Activated naive CD4-positive, alpha-beta T cell treated with anti-CD3 and anti-CD28 coated beads for 36 hours (primary cell): ENCODE measurements at regions of chr2 and their contacts with region 1.

Region 1: GRCh38 chr2:238060542-238061314 is at the start of gene SCLY:
- DNase-seq: peak; percentile 99
- H3K4me3 Mint-ChIP-seq: peak within 1 kb of the TSS; percentile 90
- H3K27ac Mint-ChIP-seq: peak within 1 kb of the TSS; percentile 87
- H3K4me1 Mint-ChIP-seq: peaks cover 48% of the 10 kb centered on the region
- H3K27me3 Mint-ChIP-seq: peaks cover 3% of the 10 kb centered on the region
- total RNA-seq, gene SCLY: 46.4 to 46.7 TPM

Region 2: GRCh38 chr2:237818066-237818473 is 242.7 kb before region 1 on chr2:
- CTCF ChIA-PET with region 1: no interaction called
- intact Hi-C with region 1: loop called (anchors 5 kb)
- DNase-seq: no peak
- H3K4me3 Mint-ChIP-seq: no peak overlapping the region
- H3K27ac Mint-ChIP-seq: no peak overlapping the region
- H3K4me1 Mint-ChIP-seq: peaks cover 26% of the 10 kb centered on the region
- H3K27me3 Mint-ChIP-seq: no peaks in the 10 kb centered on the region

Region 3: DNA sequence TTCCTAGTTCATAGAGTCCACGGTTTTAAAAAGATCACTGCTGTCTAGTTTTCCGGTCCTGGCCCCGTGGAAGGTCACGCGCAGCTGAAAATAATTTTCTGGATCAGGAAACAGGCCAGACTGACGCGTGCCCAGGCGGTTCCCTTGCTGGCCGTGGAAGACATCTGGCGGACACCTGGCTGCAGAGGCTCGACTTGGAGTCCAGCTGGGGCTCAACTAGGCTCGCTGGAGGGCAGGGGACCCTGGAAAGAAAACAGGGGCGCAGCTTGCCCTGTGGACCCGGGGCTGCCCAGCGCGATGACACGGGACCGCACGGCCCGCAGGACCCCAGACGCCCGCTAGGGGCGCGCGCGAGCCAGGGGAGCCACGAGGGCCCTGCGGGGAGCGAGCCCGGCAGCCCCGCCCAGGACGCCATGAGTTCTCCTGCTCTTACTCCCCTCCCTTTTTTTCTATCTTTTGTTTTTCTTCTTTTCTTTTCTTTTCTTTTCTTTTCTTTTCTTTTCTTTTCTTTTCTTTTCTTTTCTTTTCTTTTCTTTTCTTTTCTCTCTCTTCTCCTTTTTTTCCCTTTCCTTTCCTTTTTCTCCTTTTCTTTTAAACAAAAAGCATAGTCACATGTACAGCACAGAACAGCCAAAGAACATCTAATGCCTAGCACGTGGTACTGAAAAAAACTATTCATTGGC is 137.1 kb before region 1 on chr2:
- CTCF ChIA-PET with region 1: interaction called, 4 read pairs
- intact Hi-C with region 1: loop called (anchors 5 kb)
- DNase-seq: peak; percentile 80
- H3K4me3 Mint-ChIP-seq: peak overlapping the region; percentile 52
- H3K27ac Mint-ChIP-seq: no peak overlapping the region
- H3K4me1 Mint-ChIP-seq: peaks cover 21% of the 10 kb centered on the region
- H3K27me3 Mint-ChIP-seq: no peaks in the 10 kb centered on the region

Region 4: GRCh38 chr2:238203094-238203972 is 142.6 kb after region 1 on chr2 and contains the start of gene ILKAP:
- CTCF ChIA-PET with region 1: no interaction called
- intact Hi-C with region 1: loop called (anchors 1 kb)
- DNase-seq: peak; percentile 89
- H3K4me3 Mint-ChIP-seq: peak within 1 kb of the TSS; percentile 80
- H3K27ac Mint-ChIP-seq: peak within 1 kb of the TSS; percentile 77
- H3K4me1 Mint-ChIP-seq: peaks cover 41% of the 10 kb centered on the region
- H3K27me3 Mint-ChIP-seq: no peaks in the 10 kb centered on the region
- total RNA-seq, gene ILKAP: 46.6 to 46.7 TPM

Region 5: GRCh38 chr2:238231251-238231793 is 170.6 kb after region 1 on chr2:
- CTCF ChIA-PET with region 1: no interaction called
- intact Hi-C with region 1: loop called (anchors 5 kb)
- DNase-seq: peak; percentile 84
- H3K4me3 Mint-ChIP-seq: peak overlapping the region; percentile 74
- H3K27ac Mint-ChIP-seq: no peak overlapping the region
- H3K4me1 Mint-ChIP-seq: peaks cover 16% of the 10 kb centered on the region
- H3K27me3 Mint-ChIP-seq: peaks cover 11% of the 10 kb centered on the region